Heart right ventricle (tissue), 16 donors: ENCODE measurements at regions of chr16 and their contacts with region 1.

Region 1: DNA sequence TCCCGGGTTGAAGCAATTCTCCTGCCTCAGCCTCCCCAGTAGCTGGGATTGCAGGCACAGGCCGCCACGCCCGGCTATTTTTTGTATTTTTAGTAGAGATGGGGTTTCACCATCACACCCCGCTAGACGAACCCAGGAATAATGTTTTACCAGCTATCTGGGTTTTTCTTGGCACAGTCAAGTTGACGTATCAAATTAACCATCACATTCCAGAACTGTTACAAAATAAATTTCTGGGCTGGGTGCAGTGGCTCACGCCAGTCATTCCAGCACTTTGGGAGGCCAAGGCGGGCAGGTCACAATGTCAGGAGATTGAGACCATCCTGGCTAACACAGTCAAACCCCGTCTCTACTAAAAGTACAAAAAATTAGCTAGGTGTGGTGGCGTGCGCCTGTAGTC is 501.2 kb downstream of the SHISA9 start:
- DNase-seq: no peak
- ATAC-seq: no peak
- H3K4me3 ChIP-seq: no peak overlapping the region
- H3K27ac ChIP-seq: no peak overlapping the region
- H3K4me1 ChIP-seq: no peaks in the 10 kb centered on the region
- H3K27me3 ChIP-seq: no peaks in the 10 kb centered on the region
- CTCF ChIP-seq: no peak

Region 2: GRCh38 chr16:13298666-13299065 is 103.9 kb before region 1 on chr16:
- intact Hi-C with region 1: no loop called
- DNase-seq: no peak
- ATAC-seq: no peak
- H3K4me3 ChIP-seq: no peak overlapping the region
- H3K27ac ChIP-seq: no peak overlapping the region
- H3K4me1 ChIP-seq: no peaks in the 10 kb centered on the region
- H3K27me3 ChIP-seq: peaks cover 0 to 18% (median 6%) of the 10 kb centered on the region in 7 donors
- CTCF ChIP-seq: no peak

Region 3: GRCh38 chr16:13344001-13344400 is 58.6 kb before region 1 on chr16:
- intact Hi-C with region 1: loop called in 1 of 10 experiments (anchors 10 kb)
- DNase-seq: no peak
- ATAC-seq: no peak
- H3K4me3 ChIP-seq: no peak overlapping the region
- H3K27ac ChIP-seq: no peak overlapping the region
- H3K4me1 ChIP-seq: no peaks in the 10 kb centered on the region
- H3K27me3 ChIP-seq: peaks cover 0 to 8% (median 0%) of the 10 kb centered on the region in 7 donors
- CTCF ChIP-seq: no peak